ENCODE measurements at regions of chr5 and their contacts with region 1.

Region 1: DNA sequence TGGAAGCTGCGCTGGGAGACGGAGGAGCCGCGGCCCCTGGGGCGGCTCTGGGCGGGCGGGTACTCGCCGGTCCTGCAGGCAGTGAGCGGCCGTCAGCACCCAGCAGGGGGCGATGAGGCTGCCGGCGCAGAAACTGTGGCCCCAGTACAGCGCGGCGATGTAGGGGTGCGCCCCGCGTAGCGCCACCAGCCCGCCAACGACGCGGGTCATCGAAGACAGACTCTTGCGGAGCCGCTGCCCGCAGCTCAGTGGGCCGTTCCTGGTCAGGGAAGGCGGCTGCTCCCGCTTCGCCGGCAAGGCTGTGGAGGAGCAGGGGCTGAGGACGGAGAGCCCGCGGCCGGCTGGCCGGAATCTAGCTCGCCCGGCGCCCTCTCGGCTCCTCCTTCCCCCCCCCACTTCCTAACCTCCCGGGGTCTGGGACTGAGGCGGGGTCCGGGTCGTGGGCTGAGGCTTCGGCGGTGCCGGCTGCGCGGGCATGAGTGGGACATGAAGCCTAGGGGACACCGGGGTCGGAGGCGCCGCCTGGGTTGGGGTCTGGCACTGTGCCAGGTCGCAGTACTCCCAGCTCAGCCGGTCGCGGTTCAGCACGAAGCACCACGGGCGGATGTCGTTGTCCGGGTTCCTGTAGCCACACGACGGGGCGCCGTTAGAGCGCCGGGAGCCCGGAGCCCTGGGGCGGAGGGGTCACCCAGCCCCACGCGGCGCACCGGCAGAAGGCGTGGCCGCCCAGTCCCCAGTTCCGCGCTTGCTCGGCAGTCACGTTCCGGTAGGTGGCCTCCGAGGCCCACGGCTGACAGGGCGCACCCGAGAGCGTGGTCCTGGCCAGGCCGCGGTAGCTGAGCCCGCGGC is 3.6 kb upstream of the PFN3 start:
- DNase-seq: peak; percentile 77 to 85
- H3K4me3 ChIP-seq: peak overlapping the region; percentile 43 to 71 (median 63)
- H3K27ac ChIP-seq: peak overlapping the region; percentile 11 to 58
- H3K4me1 ChIP-seq: peaks cover 5 to 14% of the 10 kb centered on the region in 2 donors
- H3K27me3 ChIP-seq: peaks cover 9 to 27% of the 10 kb centered on the region in 2 donors
- CTCF ChIP-seq: peak; percentile 24 to 82 (median 65)
- POLR2A ChIP-seq: no peak

Region 2: GRCh38 chr5:177446200-177447065 is 42.4 kb after region 1 on chr5 and contains the start of gene PRR7:
- intact Hi-C with region 1: loop called (anchors 5 kb)
- DNase-seq: no peak
- H3K4me3 ChIP-seq: peak within 1 kb of the TSS; percentile 47 to 68 (median 60)
- H3K27ac ChIP-seq: peak within 1 kb of the TSS; percentile 15 to 55
- H3K4me1 ChIP-seq: peaks cover 0 to 13% of the 10 kb centered on the region in 2 donors
- H3K27me3 ChIP-seq: peaks cover 0 to 3% of the 10 kb centered on the region in 2 donors
- CTCF ChIP-seq: no peak
- POLR2A ChIP-seq: no peak
- total RNA-seq, gene PRR7: 0.48 to 2.0 (median 1.3) TPM

Region 3: GRCh38 chr5:177500685-177501522 is 96.9 kb after region 1 on chr5:
- intact Hi-C with region 1: loop called (anchors 5 kb)
- DNase-seq: peak; percentile 78 to 86
- H3K4me3 ChIP-seq: no peak overlapping the region
- H3K27ac ChIP-seq: no peak overlapping the region
- H3K4me1 ChIP-seq: peaks cover 0 to 4% of the 10 kb centered on the region in 2 donors
- H3K27me3 ChIP-seq: no peaks in the 10 kb centered on the region
- CTCF ChIP-seq: peak; percentile 60 to 88 (median 87)
- POLR2A ChIP-seq: no peak

Measured in breast epithelium (tissue), 4 donors.